ENCODE measurements at regions of chr7 and their contacts with region 1.

Region 1: GRCh38 chr7:123494193-123494796 is 40.1 kb downstream of the IQUB start:
- DNase-seq: peak in 4 of 5 donors; percentile 32 to 43 (median 38)
- H3K4me3 ChIP-seq: no peak overlapping the region
- H3K4me3 Mint-ChIP-seq: no peak overlapping the region
- H3K27ac ChIP-seq: no peak overlapping the region
- H3K27ac Mint-ChIP-seq: no peak overlapping the region
- H3K4me1 ChIP-seq: no peaks in the 10 kb centered on the region
- H3K4me1 Mint-ChIP-seq: peaks cover 0 to 1% (median 0%) of the 10 kb centered on the region in 4 donors
- H3K27me3 ChIP-seq: peaks cover 6% of the 10 kb centered on the region
- H3K27me3 Mint-ChIP-seq: peaks cover 11 to 13% of the 10 kb centered on the region in 2 donors

Region 2: DNA sequence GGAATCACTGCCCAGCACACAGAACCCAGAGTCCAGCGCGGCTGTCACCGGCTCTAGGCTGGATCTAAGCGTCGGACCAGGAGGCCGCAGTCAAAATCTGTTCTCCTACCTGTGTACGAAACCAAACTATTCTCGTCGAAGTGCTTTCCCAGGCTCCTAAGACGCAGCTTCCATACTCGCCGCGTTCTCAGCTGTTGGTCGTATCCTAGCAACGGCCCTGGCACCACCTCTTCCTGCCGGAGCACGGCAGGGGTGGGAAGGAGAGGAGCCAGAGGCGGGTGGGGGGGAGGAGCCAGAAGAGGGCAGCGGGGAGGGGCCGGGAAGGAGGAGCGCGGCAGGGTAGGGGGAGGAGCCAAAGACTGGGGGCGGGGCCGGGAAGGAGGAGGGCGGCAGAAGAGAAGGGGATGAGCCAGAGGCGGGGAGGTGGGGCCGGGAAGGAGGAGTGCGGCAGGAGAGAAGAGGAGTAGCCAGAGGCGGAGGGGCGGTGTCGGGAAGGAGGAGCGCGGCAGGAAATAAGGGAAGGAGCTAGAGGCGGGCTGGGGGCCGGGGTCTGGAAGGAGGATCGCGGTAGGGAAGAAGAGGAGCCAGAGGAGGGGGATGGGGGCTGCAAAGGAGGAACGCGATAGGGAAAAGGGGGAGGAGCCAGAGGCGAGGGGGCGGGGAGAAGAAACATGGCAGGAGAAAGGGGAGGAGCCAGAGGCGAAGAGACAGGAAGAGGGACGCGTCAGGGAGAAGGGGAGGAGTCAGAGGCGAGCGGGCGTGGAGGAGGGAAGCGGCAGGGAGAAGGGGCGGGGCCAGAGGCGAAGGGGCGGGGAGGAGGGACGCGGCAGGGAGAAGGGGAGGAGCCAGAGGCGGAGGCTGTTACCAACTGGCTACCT is 40.3 kb after region 1 on chr7 and contains the start of gene IQUB:
- CTCF ChIA-PET with region 1: interaction called, 49 read pairs
- POLR2A ChIA-PET with region 1: interaction called, 4 read pairs
- intact Hi-C with region 1: loop called (anchors 1 kb)
- DNase-seq: peak; percentile 89 to 93 (median 91)
- H3K4me3 ChIP-seq: peak within 1 kb of the TSS; percentile 73 to 79
- H3K4me3 Mint-ChIP-seq: peak within 1 kb of the TSS; percentile 73 to 95 (median 90)
- H3K27ac ChIP-seq: peak within 1 kb of the TSS; percentile 60
- H3K27ac Mint-ChIP-seq: peak within 1 kb of the TSS; percentile 72 to 96 (median 91)
- H3K4me1 ChIP-seq: peaks cover 26% of the 10 kb centered on the region
- H3K4me1 Mint-ChIP-seq: peaks cover 11 to 29% (median 25%) of the 10 kb centered on the region in 4 donors
- H3K27me3 ChIP-seq: peaks cover 6% of the 10 kb centered on the region
- H3K27me3 Mint-ChIP-seq: peaks cover 6 to 10% of the 10 kb centered on the region in 2 donors
- total RNA-seq, gene IQUB: 0.14 to 0.49 TPM

Region 3: GRCh38 chr7:123624527-123625183 is 130.4 kb after region 1 on chr7:
- CTCF ChIA-PET with region 1: interaction called, 11 read pairs
- POLR2A ChIA-PET with region 1: no interaction called
- intact Hi-C with region 1: loop called (anchors 5 kb)
- DNase-seq: peak; percentile 39 to 45 (median 40)
- H3K4me3 ChIP-seq: no peak overlapping the region
- H3K4me3 Mint-ChIP-seq: peak overlapping the region in 2 of 8 donors; percentile 31 to 51
- H3K27ac ChIP-seq: no peak overlapping the region
- H3K27ac Mint-ChIP-seq: no peak overlapping the region
- H3K4me1 ChIP-seq: no peaks in the 10 kb centered on the region
- H3K4me1 Mint-ChIP-seq: peaks cover 0 to 5% (median 1%) of the 10 kb centered on the region in 4 donors
- H3K27me3 ChIP-seq: no peaks in the 10 kb centered on the region
- H3K27me3 Mint-ChIP-seq: peaks cover 2 to 5% of the 10 kb centered on the region in 2 donors

Region 4: GRCh38 chr7:123705211-123705901 is 211.1 kb after region 1 on chr7:
- CTCF ChIA-PET with region 1: interaction called, 16 read pairs
- POLR2A ChIA-PET with region 1: no interaction called
- intact Hi-C with region 1: loop called (anchors 1 kb)
- DNase-seq: no peak
- H3K4me3 ChIP-seq: no peak overlapping the region
- H3K4me3 Mint-ChIP-seq: no peak overlapping the region
- H3K27ac ChIP-seq: no peak overlapping the region
- H3K27ac Mint-ChIP-seq: peak overlapping the region in 5 of 7 donors; percentile 5 to 87 (median 32)
- H3K4me1 ChIP-seq: peaks cover 6% of the 10 kb centered on the region
- H3K4me1 Mint-ChIP-seq: peaks cover 0 to 9% (median 3%) of the 10 kb centered on the region in 4 donors
- H3K27me3 ChIP-seq: no peaks in the 10 kb centered on the region
- H3K27me3 Mint-ChIP-seq: no peaks in the 10 kb centered on the region

Region 5: DNA sequence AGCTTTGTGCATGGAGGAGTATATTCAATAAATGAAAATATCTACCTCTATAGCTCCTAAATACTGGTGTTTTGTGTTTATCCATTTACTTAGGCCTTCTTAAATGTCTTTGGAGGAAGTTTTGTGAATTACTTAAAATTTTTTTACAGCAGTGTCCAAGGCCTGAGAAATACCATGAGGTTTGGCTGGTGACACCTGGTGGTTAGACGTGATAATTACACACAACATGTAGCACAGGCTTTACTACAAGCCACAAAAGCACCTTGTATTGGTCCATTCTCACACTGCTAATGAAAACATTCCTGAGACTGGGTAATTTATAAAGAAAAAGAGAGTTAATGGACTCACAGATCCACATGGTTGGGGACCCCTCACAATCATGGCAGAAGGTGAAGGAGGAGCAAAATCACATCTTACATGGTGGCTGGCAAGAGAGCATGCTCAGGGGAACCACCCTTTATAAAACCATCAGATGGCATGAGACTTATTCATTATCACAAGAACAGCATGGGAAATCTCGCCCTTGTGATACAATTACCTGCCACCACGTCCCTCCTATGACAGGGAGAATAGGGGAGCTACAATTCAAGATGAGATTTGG is 371.3 kb after region 1 on chr7:
- CTCF ChIA-PET with region 1: interaction called, 3 read pairs
- POLR2A ChIA-PET with region 1: no interaction called
- intact Hi-C with region 1: loop called (anchors 1 kb)
- DNase-seq: peak; percentile 33 to 55 (median 40)
- H3K4me3 ChIP-seq: no peak overlapping the region
- H3K4me3 Mint-ChIP-seq: no peak overlapping the region
- H3K27ac ChIP-seq: no peak overlapping the region
- H3K27ac Mint-ChIP-seq: no peak overlapping the region
- H3K4me1 ChIP-seq: no peaks in the 10 kb centered on the region
- H3K4me1 Mint-ChIP-seq: no peaks in the 10 kb centered on the region
- H3K27me3 ChIP-seq: no peaks in the 10 kb centered on the region
- H3K27me3 Mint-ChIP-seq: peaks cover 5 to 7% of the 10 kb centered on the region in 2 donors

Region 6: DNA sequence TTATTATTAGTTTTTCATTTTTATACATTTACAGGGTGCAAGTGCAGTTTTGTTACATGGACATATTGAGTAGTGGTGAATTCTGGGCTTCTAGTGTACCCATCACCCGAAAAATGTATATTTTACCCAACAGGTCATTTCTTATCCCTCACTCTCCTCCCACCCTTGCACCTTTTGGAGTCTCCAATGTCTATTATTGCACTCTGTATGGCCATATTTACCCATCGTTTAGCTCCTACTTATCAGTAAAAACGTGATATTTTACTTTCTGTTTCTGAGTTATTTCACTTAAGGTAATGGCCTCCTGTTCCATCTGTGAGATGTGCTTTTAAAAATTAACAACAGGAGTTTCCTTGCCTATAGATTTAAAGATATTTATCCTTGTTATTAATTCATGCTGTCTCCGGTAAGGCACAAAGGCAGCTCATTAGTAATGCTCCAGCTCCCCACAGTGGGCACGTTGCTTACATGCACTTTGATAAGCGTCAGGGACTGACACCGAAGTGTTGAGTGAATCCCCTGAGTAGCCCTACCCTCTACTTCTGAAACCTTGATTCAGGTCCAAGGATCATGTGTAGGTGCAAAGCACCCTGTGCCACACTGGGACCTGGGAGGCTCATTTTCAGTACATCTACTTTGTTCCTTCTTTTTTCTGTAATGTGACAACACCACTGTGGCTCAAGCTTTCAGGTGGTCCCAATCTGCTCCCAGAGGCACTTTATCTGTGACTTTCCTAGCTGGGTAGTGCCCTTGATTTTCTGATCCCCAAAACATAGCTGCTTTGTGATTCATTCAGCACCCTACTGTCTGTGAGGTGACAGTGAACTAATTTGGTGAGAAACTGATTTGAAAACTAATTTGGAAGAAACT is 377.9 kb after region 1 on chr7:
- CTCF ChIA-PET with region 1: interaction called, 3 read pairs
- POLR2A ChIA-PET with region 1: no interaction called
- intact Hi-C with region 1: loop called (anchors 1 kb)
- DNase-seq: peak; percentile 6 to 35 (median 9)
- H3K4me3 ChIP-seq: no peak overlapping the region
- H3K4me3 Mint-ChIP-seq: no peak overlapping the region
- H3K27ac ChIP-seq: no peak overlapping the region
- H3K27ac Mint-ChIP-seq: no peak overlapping the region
- H3K4me1 ChIP-seq: no peaks in the 10 kb centered on the region
- H3K4me1 Mint-ChIP-seq: peaks cover 0 to 6% (median 3%) of the 10 kb centered on the region in 4 donors
- H3K27me3 ChIP-seq: no peaks in the 10 kb centered on the region
- H3K27me3 Mint-ChIP-seq: peaks cover 3 to 7% of the 10 kb centered on the region in 2 donors

Region 7: DNA sequence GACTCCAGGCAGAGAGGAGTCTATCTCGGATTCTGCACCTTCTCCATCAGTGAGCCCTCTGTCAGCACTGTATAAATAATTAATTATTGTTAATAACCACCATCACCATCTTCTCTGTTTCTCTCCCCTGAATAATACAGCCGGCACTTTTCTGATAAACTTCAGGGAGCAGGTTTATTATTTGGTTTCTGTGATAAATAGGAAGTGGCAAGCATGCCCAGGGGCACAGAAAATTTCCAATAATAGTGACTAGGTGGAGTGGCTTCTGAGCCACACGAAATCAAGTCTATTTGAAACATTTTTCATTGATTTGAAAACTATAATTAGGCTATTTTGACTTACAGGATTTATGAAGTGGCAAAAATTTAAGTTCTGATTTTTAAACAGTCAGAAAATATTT is 725.4 kb after region 1 on chr7:
- CTCF ChIA-PET with region 1: no interaction called
- POLR2A ChIA-PET with region 1: no interaction called
- intact Hi-C with region 1: no loop called
- DNase-seq: no peak
- H3K4me3 ChIP-seq: no peak overlapping the region
- H3K4me3 Mint-ChIP-seq: no peak overlapping the region
- H3K27ac ChIP-seq: no peak overlapping the region
- H3K27ac Mint-ChIP-seq: no peak overlapping the region
- H3K4me1 ChIP-seq: no peaks in the 10 kb centered on the region
- H3K4me1 Mint-ChIP-seq: no peaks in the 10 kb centered on the region
- H3K27me3 ChIP-seq: no peaks in the 10 kb centered on the region
- H3K27me3 Mint-ChIP-seq: no peaks in the 10 kb centered on the region

Region 8: DNA sequence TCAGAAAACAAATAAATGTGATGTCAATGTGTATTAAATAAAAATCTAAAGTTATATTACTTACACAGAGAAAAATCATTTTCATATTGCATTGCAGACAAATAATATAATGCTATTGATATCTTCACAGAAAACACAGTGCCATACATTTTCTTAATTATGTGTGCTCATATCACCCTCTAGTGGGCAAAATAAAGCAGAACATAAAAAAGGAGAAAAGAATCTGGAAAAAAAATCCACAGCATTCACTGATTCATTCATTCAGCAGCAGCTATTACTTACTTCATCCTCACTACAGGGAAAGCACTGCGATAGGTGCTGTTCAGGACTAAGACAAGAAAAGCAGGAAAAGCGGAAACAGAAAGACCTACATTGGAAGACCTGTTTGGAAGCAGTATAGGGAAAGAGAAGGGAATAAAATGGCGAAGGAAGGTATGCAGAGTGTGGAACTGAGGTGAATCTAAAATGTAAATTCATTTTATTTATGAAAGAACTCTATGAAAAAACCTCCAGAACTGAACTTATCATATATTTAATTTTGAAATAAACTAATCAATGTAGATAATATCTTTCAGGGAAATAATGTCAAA is 1362.1 kb after region 1 on chr7:
- CTCF ChIA-PET with region 1: interaction called, 3 read pairs
- POLR2A ChIA-PET with region 1: no interaction called
- intact Hi-C with region 1: loop called (anchors 2 kb)
- DNase-seq: peak in 4 of 5 donors; percentile 7 to 21 (median 16)
- H3K4me3 ChIP-seq: no peak overlapping the region
- H3K4me3 Mint-ChIP-seq: no peak overlapping the region
- H3K27ac ChIP-seq: no peak overlapping the region
- H3K27ac Mint-ChIP-seq: no peak overlapping the region
- H3K4me1 ChIP-seq: no peaks in the 10 kb centered on the region
- H3K4me1 Mint-ChIP-seq: peaks cover 1 to 4% (median 3%) of the 10 kb centered on the region in 4 donors
- H3K27me3 ChIP-seq: no peaks in the 10 kb centered on the region
- H3K27me3 Mint-ChIP-seq: no peaks in the 10 kb centered on the region

Measured in CD4-positive, alpha-beta memory T cell (primary cell).